Ascending aorta (tissue), 2 donors: ENCODE measurements at regions of chr9 and their contacts with region 1.

Region 1: DNA sequence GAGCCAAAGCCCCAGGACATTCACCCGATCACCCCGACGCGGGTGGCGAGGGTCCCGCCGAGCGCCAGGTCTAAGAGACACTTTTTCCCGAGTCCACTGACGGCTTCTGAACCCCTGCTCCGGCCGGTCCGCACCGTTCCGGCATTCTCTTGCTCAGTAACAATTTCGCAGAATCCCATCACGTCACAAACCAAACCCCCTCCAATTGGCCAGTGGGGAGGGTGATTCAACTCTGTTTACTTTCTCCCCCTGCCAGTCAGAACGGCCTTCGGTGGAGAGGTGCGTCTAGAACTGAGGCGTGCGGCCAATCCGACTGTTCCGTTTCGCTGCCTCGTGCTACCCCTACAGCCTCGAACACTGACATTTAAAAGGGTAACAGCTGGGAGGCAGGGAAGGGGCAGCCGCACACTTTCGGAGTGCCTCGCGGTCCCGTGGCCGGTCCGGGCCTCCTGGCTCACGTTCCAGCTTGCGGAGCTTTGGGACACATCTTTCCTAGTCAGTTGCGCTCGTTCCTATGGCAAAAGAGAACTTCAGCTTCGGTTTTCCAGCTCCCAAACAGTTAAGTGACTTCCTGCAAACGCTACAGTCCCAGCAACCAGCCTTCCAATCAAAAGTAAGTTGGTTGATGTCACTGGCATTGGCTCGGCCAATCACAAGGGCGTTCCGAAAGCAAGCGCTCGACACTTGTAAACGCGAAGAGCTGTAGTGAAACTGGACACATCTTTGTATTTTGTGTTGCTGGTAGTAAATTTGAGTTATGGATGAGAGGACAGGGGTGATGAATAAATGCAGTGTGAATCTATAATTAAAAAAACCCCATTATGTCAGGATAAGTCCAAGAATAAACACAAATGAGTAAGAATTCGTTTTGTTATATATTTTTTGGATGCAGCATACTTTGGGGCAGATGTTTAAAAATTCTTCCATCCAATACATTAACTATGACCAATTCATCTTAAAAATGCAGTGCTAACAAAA is at the start of gene KLF9:
- DNase-seq: peak; percentile 95 to 98
- H3K4me3 ChIP-seq: peak within 1 kb of the TSS; percentile 92 to 94
- H3K27ac ChIP-seq: peak within 1 kb of the TSS; percentile 100
- H3K4me1 ChIP-seq: peaks cover 5 to 37% of the 10 kb centered on the region in 2 donors
- H3K27me3 ChIP-seq: no peaks in the 10 kb centered on the region
- CTCF ChIP-seq: no peak
- total RNA-seq, gene KLF9: 98.7 TPM

Region 2: DNA sequence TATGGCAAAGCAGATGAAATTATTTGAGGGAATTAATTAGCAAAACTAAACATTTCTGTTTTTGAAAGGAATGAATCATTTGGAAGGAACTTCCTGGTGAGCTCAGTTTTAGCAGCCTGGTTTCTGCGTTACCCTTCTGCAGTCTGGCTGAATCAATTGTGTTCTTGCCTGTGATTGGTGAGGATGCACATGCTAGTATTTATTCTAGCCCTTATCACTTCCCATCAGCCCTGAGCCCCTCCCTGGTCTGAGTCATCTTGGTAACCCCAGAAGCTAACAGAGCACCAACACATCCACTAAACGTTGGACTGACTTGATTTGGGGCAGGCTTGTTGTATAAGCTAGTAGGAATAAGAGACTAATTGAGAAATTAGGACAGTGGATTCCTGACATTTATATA is 1233.4 kb before region 1 on chr9:
- intact Hi-C with region 1: loop called (anchors 10 kb)
- DNase-seq: peak; percentile 46 to 89
- H3K4me3 ChIP-seq: peak overlapping the region in 1 of 2 donors; percentile 10
- H3K27ac ChIP-seq: peak overlapping the region; percentile 77 to 80
- H3K4me1 ChIP-seq: peaks cover 6 to 34% of the 10 kb centered on the region in 2 donors
- H3K27me3 ChIP-seq: no peaks in the 10 kb centered on the region
- CTCF ChIP-seq: no peak

Region 3: GRCh38 chr9:69919461-69920061 is 494.5 kb before region 1 on chr9:
- intact Hi-C with region 1: no loop called
- DNase-seq: no peak
- H3K4me3 ChIP-seq: no peak overlapping the region
- H3K27ac ChIP-seq: no peak overlapping the region
- H3K4me1 ChIP-seq: no peaks in the 10 kb centered on the region
- H3K27me3 ChIP-seq: no peaks in the 10 kb centered on the region
- CTCF ChIP-seq: peak; percentile 39 to 60 (median 55)

Region 4: DNA sequence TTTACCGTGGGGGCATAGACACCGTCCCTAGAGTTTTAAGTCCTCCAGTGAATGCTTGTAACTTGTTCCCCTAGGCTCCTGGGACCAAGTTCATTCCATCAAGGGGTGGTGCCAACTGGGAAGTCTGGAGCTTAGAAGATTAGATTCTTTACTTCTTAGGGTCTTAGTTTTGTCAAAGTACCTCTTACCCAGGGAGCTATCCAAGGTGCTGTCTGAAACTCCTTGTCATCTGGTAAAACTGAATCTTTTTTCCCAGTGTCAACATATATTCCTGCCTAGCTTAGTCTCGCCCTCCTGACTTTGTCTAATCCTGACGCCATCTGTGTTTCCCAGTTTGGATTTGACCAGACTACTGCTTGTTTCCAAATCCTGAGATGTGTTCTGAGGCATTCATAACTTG is 328.8 kb before region 1 on chr9:
- intact Hi-C with region 1: no loop called
- DNase-seq: no peak
- H3K4me3 ChIP-seq: no peak overlapping the region
- H3K27ac ChIP-seq: no peak overlapping the region
- H3K4me1 ChIP-seq: peaks cover 0 to 8% of the 10 kb centered on the region in 2 donors
- H3K27me3 ChIP-seq: no peaks in the 10 kb centered on the region
- CTCF ChIP-seq: no peak

Region 5: GRCh38 chr9:70192716-70193115 is 221.4 kb before region 1 on chr9:
- intact Hi-C with region 1: no loop called
- DNase-seq: no peak
- H3K4me3 ChIP-seq: no peak overlapping the region
- H3K27ac ChIP-seq: no peak overlapping the region
- H3K4me1 ChIP-seq: no peaks in the 10 kb centered on the region
- H3K27me3 ChIP-seq: no peaks in the 10 kb centered on the region
- CTCF ChIP-seq: no peak

Region 6: DNA sequence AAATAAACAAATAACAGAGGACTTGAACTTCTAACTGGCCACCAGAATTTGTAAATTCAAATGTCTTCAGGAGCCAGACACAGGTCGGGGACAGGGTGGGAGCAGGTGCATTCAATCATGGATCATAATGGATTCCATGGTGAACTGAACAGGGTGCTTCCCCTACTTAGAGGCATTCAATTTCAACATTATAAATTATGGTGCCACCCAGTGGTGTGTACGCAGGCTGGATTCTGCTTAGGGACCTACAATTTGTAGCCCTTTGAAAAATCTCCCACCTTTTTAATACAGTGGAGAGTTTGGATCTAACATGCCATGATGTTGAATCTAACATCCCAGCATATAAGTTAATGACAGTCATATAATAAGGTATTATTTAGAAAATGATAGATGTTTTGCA is 21.9 kb before region 1 on chr9:
- intact Hi-C with region 1: no loop called
- DNase-seq: no peak
- H3K4me3 ChIP-seq: peak overlapping the region in 1 of 2 donors; percentile 6
- H3K27ac ChIP-seq: no peak overlapping the region
- H3K4me1 ChIP-seq: peaks cover 20 to 66% of the 10 kb centered on the region in 2 donors
- H3K27me3 ChIP-seq: no peaks in the 10 kb centered on the region
- CTCF ChIP-seq: peak; percentile 7 to 21 (median 15)